ENCODE measurements at regions of chr2 and their contacts with region 1.

Region 1: GRCh38 chr2:55419679-55420438 is at the start of gene CCDC88A:
- DNase-seq: peak; percentile 76 to 96 (median 84)
- ATAC-seq: peak; percentile 76
- H3K4me3 ChIP-seq: peak within 1 kb of the TSS; percentile 94
- H3K4me3 Mint-ChIP-seq: peak within 1 kb of the TSS; percentile 95
- H3K27ac ChIP-seq: peak within 1 kb of the TSS; percentile 56 to 81
- H3K27ac Mint-ChIP-seq: peak within 1 kb of the TSS; percentile 79
- H3K4me1 ChIP-seq: peaks cover 12% of the 10 kb centered on the region
- H3K4me1 Mint-ChIP-seq: peaks cover 44% of the 10 kb centered on the region
- H3K27me3 ChIP-seq: no peaks in the 10 kb centered on the region
- H3K27me3 Mint-ChIP-seq: no peaks in the 10 kb centered on the region
- CTCF ChIP-seq: no peak
- total RNA-seq, gene CCDC88A: 11.0 to 12.9 TPM

Region 2: DNA sequence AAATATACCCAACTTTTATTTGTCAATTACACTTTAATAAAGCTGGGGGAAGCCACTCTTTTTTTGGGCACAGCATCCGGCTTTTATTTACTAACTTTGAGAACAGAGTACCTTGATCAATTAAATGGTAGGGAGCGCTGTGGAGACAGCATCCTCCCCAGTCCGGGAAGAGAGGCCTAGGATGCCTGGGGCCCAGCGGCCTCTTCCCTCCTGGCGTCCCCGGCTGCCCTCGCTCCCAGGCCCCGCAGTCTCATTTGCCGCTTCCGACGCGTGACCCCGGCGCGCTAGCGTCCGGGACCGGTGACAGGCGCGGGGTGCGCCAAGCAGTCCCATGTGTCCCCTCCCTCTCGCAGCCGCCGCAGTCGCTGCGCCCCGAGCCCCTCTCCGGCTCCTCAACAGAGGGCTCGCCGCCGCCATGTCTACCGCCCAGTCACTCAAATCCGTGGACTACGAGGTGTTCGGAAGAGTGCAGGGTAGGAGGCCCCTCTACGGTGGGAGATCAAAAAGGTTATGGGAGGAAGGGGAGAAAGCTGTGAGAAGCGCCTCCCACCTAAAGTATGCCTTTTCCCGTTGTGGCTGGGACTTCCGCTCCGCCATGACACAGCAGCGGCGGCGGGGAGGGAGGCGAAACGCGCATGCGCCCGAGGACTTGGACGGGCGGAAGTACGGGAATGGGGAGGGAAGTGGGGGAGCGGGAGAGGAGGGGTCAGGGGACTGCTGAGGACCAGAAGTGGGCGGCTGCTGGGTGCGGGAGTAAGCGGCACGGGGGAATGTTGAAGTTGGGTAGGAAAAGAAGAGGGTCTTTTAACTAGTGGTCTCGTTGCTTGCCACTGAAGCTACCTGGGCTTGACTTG is 1304.3 kb before region 1 on chr2 and contains the start of gene ACYP2:
- CTCF ChIA-PET with region 1: no interaction called
- POLR2A ChIA-PET with region 1: no interaction called
- intact Hi-C with region 1: loop called in 1 of 2 experiments (anchors 10 kb)
- DNase-seq: peak; percentile 79 to 96 (median 90)
- ATAC-seq: peak; percentile 78
- H3K4me3 ChIP-seq: peak within 1 kb of the TSS; percentile 86
- H3K4me3 Mint-ChIP-seq: peak within 1 kb of the TSS; percentile 92
- H3K27ac ChIP-seq: peak within 1 kb of the TSS; percentile 96 to 98
- H3K27ac Mint-ChIP-seq: peak within 1 kb of the TSS; percentile 99
- H3K4me1 ChIP-seq: peaks cover 11% of the 10 kb centered on the region
- H3K4me1 Mint-ChIP-seq: peaks cover 16% of the 10 kb centered on the region
- H3K27me3 ChIP-seq: no peaks in the 10 kb centered on the region
- H3K27me3 Mint-ChIP-seq: no peaks in the 10 kb centered on the region
- CTCF ChIP-seq: peak; percentile 17
- total RNA-seq, gene ACYP2: 9.3 to 10.9 TPM

Region 3: DNA sequence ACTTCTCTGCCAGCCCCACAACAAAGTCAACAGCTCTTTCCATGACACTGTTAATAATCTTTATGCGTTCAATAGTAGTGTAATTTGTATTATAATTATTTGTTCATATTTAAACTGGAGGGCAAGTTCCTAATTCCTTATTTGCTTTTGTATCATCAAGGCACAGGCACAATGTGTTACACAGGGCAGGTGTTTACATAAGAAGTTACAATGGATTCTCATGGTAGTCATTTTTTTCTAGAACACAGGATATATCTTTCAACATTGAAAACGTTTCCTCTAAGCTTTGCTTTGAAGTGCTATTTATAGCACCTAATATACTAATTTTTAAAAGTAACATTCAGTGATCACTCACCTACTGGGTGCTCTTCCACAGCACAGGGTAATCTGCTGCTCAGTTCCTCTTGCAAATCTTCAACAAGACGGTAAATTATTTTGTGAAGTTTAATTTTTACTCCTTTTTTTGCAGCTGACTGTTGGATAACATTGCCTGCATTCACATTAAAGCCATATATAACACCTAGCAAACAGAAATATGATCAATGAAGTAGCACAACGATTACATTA is 180.1 kb before region 1 on chr2:
- CTCF ChIA-PET with region 1: no interaction called
- POLR2A ChIA-PET with region 1: no interaction called
- intact Hi-C with region 1: loop called in 1 of 2 experiments (anchors 5 kb)
- DNase-seq: no peak
- ATAC-seq: no peak
- H3K4me3 ChIP-seq: no peak overlapping the region
- H3K4me3 Mint-ChIP-seq: no peak overlapping the region
- H3K27ac ChIP-seq: no peak overlapping the region
- H3K27ac Mint-ChIP-seq: peak overlapping the region; percentile 39
- H3K4me1 ChIP-seq: no peaks in the 10 kb centered on the region
- H3K4me1 Mint-ChIP-seq: peaks cover 22% of the 10 kb centered on the region
- H3K27me3 ChIP-seq: no peaks in the 10 kb centered on the region
- H3K27me3 Mint-ChIP-seq: no peaks in the 10 kb centered on the region
- CTCF ChIP-seq: no peak

Region 4: GRCh38 chr2:55282110-55282917 is 137.5 kb before region 1 on chr2:
- CTCF ChIA-PET with region 1: no interaction called
- POLR2A ChIA-PET with region 1: no interaction called
- intact Hi-C with region 1: loop called in 1 of 2 experiments (anchors 5 kb)
- DNase-seq: peak; percentile 77 to 93 (median 86)
- ATAC-seq: peak; percentile 98
- H3K4me3 ChIP-seq: peak overlapping the region; percentile 81
- H3K4me3 Mint-ChIP-seq: peak overlapping the region; percentile 96
- H3K27ac ChIP-seq: peak overlapping the region; percentile 78 to 88
- H3K27ac Mint-ChIP-seq: peak overlapping the region; percentile 97
- H3K4me1 ChIP-seq: peaks cover 11% of the 10 kb centered on the region
- H3K4me1 Mint-ChIP-seq: peaks cover 31% of the 10 kb centered on the region
- H3K27me3 ChIP-seq: no peaks in the 10 kb centered on the region
- H3K27me3 Mint-ChIP-seq: no peaks in the 10 kb centered on the region
- CTCF ChIP-seq: no peak

Region 5: GRCh38 chr2:55693181-55694134 is 273.6 kb after region 1 on chr2 and contains the start of gene PNPT1:
- CTCF ChIA-PET with region 1: no interaction called
- POLR2A ChIA-PET with region 1: no interaction called
- intact Hi-C with region 1: loop called in 1 of 2 experiments (anchors 10 kb)
- DNase-seq: peak; percentile 85 to 96 (median 90)
- ATAC-seq: peak; percentile 100
- H3K4me3 ChIP-seq: peak within 1 kb of the TSS; percentile 94
- H3K4me3 Mint-ChIP-seq: peak within 1 kb of the TSS; percentile 94
- H3K27ac ChIP-seq: peak within 1 kb of the TSS; percentile 31 to 37
- H3K27ac Mint-ChIP-seq: peak within 1 kb of the TSS; percentile 92
- H3K4me1 ChIP-seq: peaks cover 10% of the 10 kb centered on the region
- H3K4me1 Mint-ChIP-seq: peaks cover 44% of the 10 kb centered on the region
- H3K27me3 ChIP-seq: no peaks in the 10 kb centered on the region
- H3K27me3 Mint-ChIP-seq: no peaks in the 10 kb centered on the region
- CTCF ChIP-seq: no peak
- total RNA-seq, gene PNPT1: 10.2 to 10.3 TPM

Region 6: GRCh38 chr2:56540916-56541315 is 1121.1 kb after region 1 on chr2:
- CTCF ChIA-PET with region 1: no interaction called
- POLR2A ChIA-PET with region 1: no interaction called
- intact Hi-C with region 1: no loop called
- DNase-seq: no peak
- ATAC-seq: no peak
- H3K4me3 ChIP-seq: no peak overlapping the region
- H3K4me3 Mint-ChIP-seq: no peak overlapping the region
- H3K27ac ChIP-seq: no peak overlapping the region
- H3K27ac Mint-ChIP-seq: no peak overlapping the region
- H3K4me1 ChIP-seq: no peaks in the 10 kb centered on the region
- H3K4me1 Mint-ChIP-seq: no peaks in the 10 kb centered on the region
- H3K27me3 ChIP-seq: no peaks in the 10 kb centered on the region
- H3K27me3 Mint-ChIP-seq: no peaks in the 10 kb centered on the region
- CTCF ChIP-seq: no peak

Measured in CD4-positive, alpha-beta T cell (primary cell).